Right cardiac atrium (tissue), 5 donors: ENCODE measurements at regions of chr20 and their contacts with region 1.

Region 1: DNA sequence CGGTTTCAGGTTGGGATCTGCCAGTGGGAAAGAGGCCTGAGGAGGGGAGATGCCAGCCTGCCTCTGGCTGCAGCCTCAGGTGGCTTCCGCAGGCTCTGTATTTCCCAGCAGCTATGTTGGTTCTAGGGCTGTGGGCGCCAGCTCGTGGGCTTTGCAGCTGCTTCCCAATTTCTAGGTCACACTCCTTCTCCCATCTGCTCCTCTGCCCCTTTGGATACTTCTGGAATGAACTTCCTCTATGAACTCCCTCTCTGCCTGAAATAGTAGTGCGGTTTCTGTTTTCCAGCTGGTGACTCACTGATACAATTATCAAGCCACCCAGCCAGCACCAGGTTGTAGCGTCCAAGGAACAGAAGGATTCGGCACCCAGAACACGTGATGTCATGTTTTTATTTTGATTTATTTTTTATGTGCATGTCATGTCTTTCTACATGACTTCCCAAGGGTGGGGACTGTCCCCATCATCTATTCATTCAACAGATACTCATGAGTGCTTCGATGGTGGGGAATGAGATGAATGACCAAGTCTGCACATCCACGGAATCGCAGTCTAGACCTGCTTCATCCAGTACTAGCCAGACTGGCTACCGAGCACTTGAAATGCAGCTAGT is 38.0 kb downstream of the TGM2 start:
- DNase-seq: peak in 2 of 3 donors; percentile 59 to 79
- ATAC-seq: peak; percentile 50 to 57
- H3K4me3 ChIP-seq: no peak overlapping the region
- H3K27ac ChIP-seq: peak overlapping the region; percentile 91
- H3K4me1 ChIP-seq: peaks cover 11% of the 10 kb centered on the region
- H3K27me3 ChIP-seq: no peaks in the 10 kb centered on the region

Region 2: DNA sequence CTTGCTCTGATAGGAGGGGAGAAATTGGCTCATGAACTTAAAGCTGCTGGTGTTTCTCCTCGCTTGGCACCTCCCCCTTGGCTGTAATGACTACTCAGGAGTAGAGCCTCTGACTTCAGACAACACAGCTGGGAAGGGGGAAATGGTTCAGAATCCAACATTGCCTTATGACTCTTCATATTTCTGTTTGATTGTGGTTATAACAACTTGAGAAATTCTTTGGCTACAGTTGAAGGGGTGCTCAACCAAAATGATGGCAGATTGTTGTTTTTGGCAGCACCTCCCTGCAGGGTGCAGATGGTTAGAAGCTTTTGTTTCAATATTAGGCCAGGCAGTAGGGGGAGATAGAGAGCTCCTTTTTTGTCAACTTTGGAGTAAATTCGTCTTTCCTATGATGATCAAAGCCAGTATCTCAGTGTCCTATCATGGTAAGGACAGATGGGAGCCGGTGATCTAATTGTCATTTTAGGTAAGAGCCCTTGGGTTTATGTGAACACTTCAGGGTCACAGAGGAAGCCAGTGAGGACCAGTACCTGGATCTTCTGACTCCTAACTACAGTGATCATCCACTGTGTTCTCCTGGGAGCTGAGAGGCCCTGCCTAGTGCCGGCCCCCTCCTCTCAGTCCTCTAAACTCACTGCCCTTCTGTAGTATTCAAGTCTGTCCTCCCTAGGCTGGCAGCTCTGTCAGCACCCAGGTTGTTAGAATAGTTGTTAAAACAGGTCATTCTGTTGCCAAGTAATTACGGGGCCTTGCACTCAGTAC is 53.6 kb before region 1 on chr20:
- intact Hi-C with region 1: loop called in 1 of 4 experiments (anchors 10 kb)
- DNase-seq: peak; percentile 74 to 80 (median 74)
- ATAC-seq: peak; percentile 86 to 87
- H3K4me3 ChIP-seq: no peak overlapping the region
- H3K27ac ChIP-seq: peak overlapping the region; percentile 80
- H3K4me1 ChIP-seq: peaks cover 6% of the 10 kb centered on the region
- H3K27me3 ChIP-seq: no peaks in the 10 kb centered on the region

Region 3: GRCh38 chr20:38151455-38151854 is 24.3 kb after region 1 on chr20:
- intact Hi-C with region 1: loop called in 1 of 4 experiments (anchors 2 kb)
- DNase-seq: peak in 1 of 3 donors; percentile 41
- ATAC-seq: no peak
- H3K4me3 ChIP-seq: no peak overlapping the region
- H3K27ac ChIP-seq: peak overlapping the region; percentile 69
- H3K4me1 ChIP-seq: peaks cover 4% of the 10 kb centered on the region
- H3K27me3 ChIP-seq: no peaks in the 10 kb centered on the region